ENCODE measurements at regions of chr5 and their contacts with region 1.

Region 1: GRCh38 chr5:14399054-14399692 is 182.4 kb upstream of the OTULINL start:
- DNase-seq: peak; percentile 44
- H3K4me3 Mint-ChIP-seq: no peak overlapping the region
- H3K27ac Mint-ChIP-seq: no peak overlapping the region
- H3K4me1 Mint-ChIP-seq: peaks cover 59% of the 10 kb centered on the region
- H3K27me3 Mint-ChIP-seq: peaks cover 8% of the 10 kb centered on the region

Region 2: DNA sequence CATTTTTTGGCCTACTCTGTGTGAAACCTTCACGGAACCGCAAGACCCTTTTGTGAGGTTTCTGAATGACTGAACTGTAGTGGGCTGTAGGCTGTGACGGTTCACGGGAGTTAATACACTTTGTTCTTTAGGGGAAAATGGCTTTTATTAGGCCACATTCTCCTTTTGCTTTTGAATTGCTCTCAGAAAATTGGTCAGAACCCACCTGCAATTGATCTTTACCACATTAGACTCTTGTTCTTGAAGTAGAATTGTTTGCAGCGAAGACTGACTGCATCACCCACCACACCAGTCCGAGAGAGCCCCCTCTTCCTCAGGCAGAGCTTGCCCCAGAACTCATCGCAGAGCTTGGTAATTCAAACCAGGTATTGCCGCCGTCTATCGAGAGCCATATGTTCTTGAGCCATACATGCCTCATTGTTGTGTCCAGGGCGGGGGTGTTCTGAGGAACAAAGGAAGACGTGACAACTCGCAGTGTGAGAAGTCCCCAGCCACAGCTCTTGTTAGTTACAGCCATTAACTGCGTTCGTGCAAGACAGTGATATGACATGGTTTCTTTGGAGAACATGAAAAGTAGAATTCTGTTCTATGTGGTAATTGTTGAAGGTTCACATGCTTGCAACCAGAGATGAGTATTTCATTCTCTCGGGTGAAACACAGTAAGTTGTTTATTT is 16.0 kb after region 1 on chr5:
- CTCF ChIA-PET with region 1: interaction called, 15 read pairs
- DNase-seq: peak; percentile 26
- H3K4me3 Mint-ChIP-seq: peak overlapping the region; percentile 24
- H3K27ac Mint-ChIP-seq: peak overlapping the region; percentile 98
- H3K4me1 Mint-ChIP-seq: peaks cover 56% of the 10 kb centered on the region
- H3K27me3 Mint-ChIP-seq: peaks cover 6% of the 10 kb centered on the region

Region 3: DNA sequence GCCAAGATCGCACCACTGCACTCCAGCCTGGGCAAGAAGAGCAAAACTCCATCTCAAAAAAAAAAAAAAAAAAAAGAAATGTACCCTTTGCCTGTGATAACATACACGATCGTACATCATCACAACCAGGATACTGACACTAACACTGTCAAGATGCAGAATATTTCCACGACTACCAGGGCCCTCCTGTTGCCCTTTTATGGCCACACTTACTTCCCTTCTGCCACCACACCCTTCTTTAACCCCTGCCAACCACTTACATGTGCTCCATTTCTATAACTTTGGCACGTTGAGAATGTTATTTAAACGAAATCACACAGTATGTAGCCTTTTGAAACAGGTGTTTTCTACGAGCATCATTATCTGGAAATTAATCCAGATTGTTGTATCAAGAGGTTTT is 113.4 kb after region 1 on chr5:
- CTCF ChIA-PET with region 1: no interaction called
- DNase-seq: no peak
- H3K4me3 Mint-ChIP-seq: no peak overlapping the region
- H3K27ac Mint-ChIP-seq: no peak overlapping the region
- H3K4me1 Mint-ChIP-seq: no peaks in the 10 kb centered on the region
- H3K27me3 Mint-ChIP-seq: peaks cover 13% of the 10 kb centered on the region

Region 4: GRCh38 chr5:14545308-14545707 is 146.1 kb after region 1 on chr5:
- CTCF ChIA-PET with region 1: no interaction called
- DNase-seq: no peak
- H3K4me3 Mint-ChIP-seq: no peak overlapping the region
- H3K27ac Mint-ChIP-seq: no peak overlapping the region
- H3K4me1 Mint-ChIP-seq: peaks cover 7% of the 10 kb centered on the region
- H3K27me3 Mint-ChIP-seq: peaks cover 14% of the 10 kb centered on the region

Region 5: DNA sequence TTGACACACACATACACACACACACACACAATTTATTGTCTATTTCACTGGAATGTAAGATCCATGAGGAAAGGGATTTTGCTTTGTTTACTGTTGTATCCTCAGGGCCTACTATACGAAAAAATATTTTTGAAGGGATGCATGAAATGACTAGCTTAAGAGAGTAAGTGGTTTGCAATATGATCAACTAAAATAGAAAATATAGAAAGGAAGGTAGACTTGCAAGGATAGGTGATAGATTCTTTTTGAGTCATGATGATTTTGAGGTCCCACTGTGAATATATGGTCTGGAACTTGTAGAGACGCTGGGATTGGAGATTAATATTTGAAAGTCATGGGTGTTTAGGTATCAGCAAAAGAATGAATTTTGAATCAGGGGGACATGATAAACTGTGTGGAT is 236.5 kb after region 1 on chr5:
- CTCF ChIA-PET with region 1: no interaction called
- DNase-seq: no peak
- H3K4me3 Mint-ChIP-seq: no peak overlapping the region
- H3K27ac Mint-ChIP-seq: no peak overlapping the region
- H3K4me1 Mint-ChIP-seq: no peaks in the 10 kb centered on the region
- H3K27me3 Mint-ChIP-seq: peaks cover 7% of the 10 kb centered on the region

Measured in activated naive CD4-positive, alpha-beta T cell treated with anti-CD3 and anti-CD28 coated beads, Interleukin-2, amount 10 ng/mL, durations not matched to agents 7 days and 5 days (primary cell).